T-cell (primary cell): ENCODE measurements at regions of chr13 and their contacts with region 1.

Region 1: GRCh38 chr13:45055198-45055901 is 65.0 kb upstream of the GTF2F2 start:
- DNase-seq: no peak
- ATAC-seq: peak in 2 of 4 experiments; percentile 33 to 44
- H3K4me3 ChIP-seq: no peak overlapping the region
- H3K4me3 Mint-ChIP-seq: no peak overlapping the region
- H3K27ac ChIP-seq: no peak overlapping the region
- H3K27ac Mint-ChIP-seq: peak overlapping the region in 1 of 2 donors; percentile 46
- H3K4me1 ChIP-seq: no peaks in the 10 kb centered on the region
- H3K4me1 Mint-ChIP-seq: peaks cover 0 to 10% (median 9%) of the 10 kb centered on the region in 3 donors
- H3K27me3 ChIP-seq: peaks cover 0 to under 1% of the 10 kb centered on the region in 2 experiments
- H3K27me3 Mint-ChIP-seq: peaks cover 4 to 7% of the 10 kb centered on the region in 2 donors

Region 2: DNA sequence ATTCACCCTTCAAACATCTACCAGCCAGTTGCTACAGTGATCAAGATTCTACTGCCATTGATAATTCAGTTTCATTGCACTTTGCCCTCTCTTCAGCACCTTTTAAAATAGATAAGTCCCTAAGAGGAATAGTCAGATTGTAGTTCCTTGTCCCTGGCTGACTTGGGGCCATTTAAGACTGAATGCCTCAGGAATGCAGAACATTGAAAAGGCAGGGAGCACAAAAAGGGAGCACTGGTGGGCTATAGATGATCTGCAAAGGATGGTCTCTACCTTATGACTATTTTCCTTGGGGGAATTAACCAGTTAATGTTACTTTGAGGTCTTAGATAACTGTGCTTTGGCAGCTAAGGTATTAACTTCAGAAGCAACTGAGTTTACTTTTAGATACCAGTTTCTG is 19.1 kb before region 1 on chr13:
- CTCF ChIA-PET with region 1: interaction called in 1 of 2 experiments, 13 read pairs
- POLR2A ChIA-PET with region 1: interaction called in 1 of 2 experiments, 5 read pairs
- DNase-seq: no peak
- ATAC-seq: no peak
- H3K4me3 ChIP-seq: no peak overlapping the region
- H3K4me3 Mint-ChIP-seq: no peak overlapping the region
- H3K27ac ChIP-seq: no peak overlapping the region
- H3K27ac Mint-ChIP-seq: no peak overlapping the region
- H3K4me1 ChIP-seq: no peaks in the 10 kb centered on the region
- H3K4me1 Mint-ChIP-seq: peaks cover 0 to 4% (median 0%) of the 10 kb centered on the region in 3 donors
- H3K27me3 ChIP-seq: no peaks in the 10 kb centered on the region
- H3K27me3 Mint-ChIP-seq: no peaks in the 10 kb centered on the region

Region 3: DNA sequence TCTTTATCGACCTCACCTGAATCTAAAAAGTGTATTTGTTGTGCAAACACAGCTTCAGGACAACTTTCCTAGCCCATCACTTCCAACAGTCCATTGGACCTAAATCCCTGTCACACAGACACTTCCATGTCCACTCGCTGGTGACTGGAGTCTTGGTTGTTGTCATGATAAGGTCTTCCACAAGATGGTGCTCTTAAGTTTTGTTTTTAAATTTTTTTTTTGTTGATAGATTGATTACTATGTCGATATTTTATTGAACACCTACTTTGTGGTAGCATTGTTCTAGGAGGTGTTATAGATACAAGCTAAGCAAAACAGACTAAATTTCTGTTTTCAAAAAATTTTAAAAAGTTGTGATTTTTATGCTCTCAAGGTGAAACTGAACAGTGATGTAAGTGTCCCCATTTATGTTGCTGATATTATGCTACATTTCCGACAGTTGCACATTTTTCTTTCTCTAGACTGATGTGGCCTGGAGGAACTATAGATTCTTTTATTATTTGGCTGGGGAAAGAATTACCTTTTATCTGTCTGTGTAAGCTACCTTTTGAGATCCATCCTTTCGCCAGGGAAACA is 568.3 kb after region 1 on chr13:
- CTCF ChIA-PET with region 1: interaction called in 1 of 2 experiments, 11 read pairs
- POLR2A ChIA-PET with region 1: no interaction called
- DNase-seq: peak in 1 of 35 experiments; percentile 42
- ATAC-seq: no peak
- H3K4me3 ChIP-seq: no peak overlapping the region
- H3K4me3 Mint-ChIP-seq: no peak overlapping the region
- H3K27ac ChIP-seq: no peak overlapping the region
- H3K27ac Mint-ChIP-seq: no peak overlapping the region
- H3K4me1 ChIP-seq: peaks cover 0 to 9% of the 10 kb centered on the region in 2 experiments
- H3K4me1 Mint-ChIP-seq: peaks cover 0 to 4% (median 0%) of the 10 kb centered on the region in 3 donors
- H3K27me3 ChIP-seq: peaks cover 0 to 14% of the 10 kb centered on the region in 2 experiments
- H3K27me3 Mint-ChIP-seq: peaks cover 37 to 48% of the 10 kb centered on the region in 2 donors